ENCODE measurements at regions of chr4 and their contacts with region 1.

Region 1: GRCh38 chr4:6327041-6327917 is 57.6 kb downstream of the WFS1 start:
- DNase-seq: peak; percentile 68 to 95 (median 80)
- ATAC-seq: peak; percentile 89
- H3K4me3 ChIP-seq: no peak overlapping the region
- H3K27ac ChIP-seq: no peak overlapping the region
- H3K4me1 ChIP-seq: peaks cover 0 to 9% of the 10 kb centered on the region in 2 donors
- H3K27me3 ChIP-seq: peaks cover 0 to 50% of the 10 kb centered on the region in 2 donors
- CTCF ChIP-seq: peak; percentile 96 to 97

Region 2: GRCh38 chr4:6245246-6246169 is 81.8 kb before region 1 on chr4:
- intact Hi-C with region 1: loop called in 1 of 2 experiments (anchors 5 kb)
- DNase-seq: peak in 1 of 4 donors; percentile 37
- ATAC-seq: peak; percentile 18
- H3K4me3 ChIP-seq: no peak overlapping the region
- H3K27ac ChIP-seq: no peak overlapping the region
- H3K4me1 ChIP-seq: no peaks in the 10 kb centered on the region
- H3K27me3 ChIP-seq: peaks cover 14 to 85% of the 10 kb centered on the region in 2 donors
- CTCF ChIP-seq: no peak

Region 3: GRCh38 chr4:6264225-6264540 is 63.1 kb before region 1 on chr4:
- intact Hi-C with region 1: loop called in 1 of 2 experiments (anchors 5 kb)
- DNase-seq: peak in 2 of 4 donors; percentile 59 to 68
- ATAC-seq: peak; percentile 89
- H3K4me3 ChIP-seq: no peak overlapping the region
- H3K27ac ChIP-seq: no peak overlapping the region
- H3K4me1 ChIP-seq: peaks cover 0 to 12% of the 10 kb centered on the region in 2 donors
- H3K27me3 ChIP-seq: peaks cover 0 to 9% of the 10 kb centered on the region in 2 donors
- CTCF ChIP-seq: peak; percentile 29 to 39